Breast epithelium (tissue), 4 donors: ENCODE measurements at regions of chr6 and their contacts with region 1.

Region 1: GRCh38 chr6:159693128-159693893 is at the start of gene SOD2:
- DNase-seq: peak; percentile 69 to 74
- H3K4me3 ChIP-seq: peak within 1 kb of the TSS; percentile 94 to 95 (median 95)
- H3K27ac ChIP-seq: peak within 1 kb of the TSS; percentile 93 to 97
- H3K4me1 ChIP-seq: peaks cover 0 to 11% of the 10 kb centered on the region in 2 donors
- H3K27me3 ChIP-seq: no peaks in the 10 kb centered on the region
- CTCF ChIP-seq: no peak
- POLR2A ChIP-seq: peak; percentile 55
- total RNA-seq, gene SOD2: 999 to 1,273 (median 1,163) TPM

Region 2: GRCh38 chr6:158284007-158284875 is 1409.1 kb before region 1 on chr6:
- intact Hi-C with region 1: no loop called
- DNase-seq: peak in 1 of 2 donors; percentile 60
- H3K4me3 ChIP-seq: no peak overlapping the region
- H3K27ac ChIP-seq: peak overlapping the region; percentile 62 to 69
- H3K4me1 ChIP-seq: peaks cover 2 to 10% of the 10 kb centered on the region in 2 donors
- H3K27me3 ChIP-seq: no peaks in the 10 kb centered on the region
- CTCF ChIP-seq: no peak
- POLR2A ChIP-seq: no peak

Region 3: DNA sequence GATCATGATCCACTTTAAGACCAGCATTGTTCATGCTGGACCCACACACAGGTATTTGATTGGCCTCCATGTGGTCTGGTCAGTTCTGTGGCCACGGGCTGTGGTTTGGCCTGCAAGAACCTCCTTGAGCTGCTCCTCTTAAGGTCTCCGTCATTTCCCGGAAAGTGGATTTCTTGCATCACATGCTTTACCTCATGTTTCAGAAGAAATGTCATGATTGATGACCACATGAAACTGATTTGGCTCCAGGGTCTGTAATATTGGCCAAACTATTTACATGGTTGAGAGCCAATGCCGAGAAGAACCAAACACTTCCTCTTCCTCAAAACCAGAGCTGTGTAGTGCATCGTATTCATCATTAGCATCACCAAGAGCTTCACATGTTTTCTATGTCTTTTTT is 680.1 kb before region 1 on chr6:
- intact Hi-C with region 1: no loop called
- DNase-seq: no peak
- H3K4me3 ChIP-seq: no peak overlapping the region
- H3K27ac ChIP-seq: no peak overlapping the region
- H3K4me1 ChIP-seq: no peaks in the 10 kb centered on the region
- H3K27me3 ChIP-seq: no peaks in the 10 kb centered on the region
- CTCF ChIP-seq: no peak
- POLR2A ChIP-seq: no peak

Region 4: GRCh38 chr6:159726918-159727716 is 33.8 kb after region 1 on chr6 and contains the start of gene WTAP:
- intact Hi-C with region 1: loop called (anchors 2 kb)
- DNase-seq: peak; percentile 97
- H3K4me3 ChIP-seq: peak within 1 kb of the TSS; percentile 88 to 96 (median 93)
- H3K27ac ChIP-seq: peak within 1 kb of the TSS; percentile 100
- H3K4me1 ChIP-seq: peaks cover 0 to 4% of the 10 kb centered on the region in 2 donors
- H3K27me3 ChIP-seq: no peaks in the 10 kb centered on the region
- CTCF ChIP-seq: peak in 1 of 3 donors; percentile 13
- POLR2A ChIP-seq: peak; percentile 59
- total RNA-seq, gene WTAP: 115 to 153 (median 116) TPM

Region 5: DNA sequence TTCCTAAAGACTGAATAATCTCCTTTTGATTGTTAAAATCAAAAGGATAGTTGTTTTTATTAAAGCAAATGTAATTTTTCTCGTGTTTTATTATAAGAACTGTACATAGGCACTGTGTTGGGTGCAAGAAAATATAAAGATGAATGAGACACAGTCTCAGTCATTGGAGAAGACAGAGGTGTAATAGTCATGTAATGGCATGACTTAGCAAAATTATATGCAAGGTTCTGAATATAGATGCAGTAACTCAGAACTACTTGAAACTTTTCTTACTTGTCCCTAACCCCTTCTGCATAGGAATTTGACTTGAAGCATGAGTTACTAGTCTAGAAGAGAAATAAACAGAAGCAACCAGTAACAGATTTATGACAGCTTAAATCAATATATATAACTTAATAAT is 48.9 kb after region 1 on chr6:
- intact Hi-C with region 1: loop called (anchors 2 kb)
- DNase-seq: no peak
- H3K4me3 ChIP-seq: no peak overlapping the region
- H3K27ac ChIP-seq: no peak overlapping the region
- H3K4me1 ChIP-seq: no peaks in the 10 kb centered on the region
- H3K27me3 ChIP-seq: no peaks in the 10 kb centered on the region
- CTCF ChIP-seq: no peak
- POLR2A ChIP-seq: no peak

Region 6: GRCh38 chr6:159789377-159790148 is 96.3 kb after region 1 on chr6 and contains the start of gene TCP1:
- intact Hi-C with region 1: loop called (anchors 5 kb)
- DNase-seq: peak; percentile 99
- H3K4me3 ChIP-seq: peak within 1 kb of the TSS; percentile 86 to 99 (median 92)
- H3K27ac ChIP-seq: peak within 1 kb of the TSS; percentile 94 to 97
- H3K4me1 ChIP-seq: peaks cover 4 to 19% of the 10 kb centered on the region in 2 donors
- H3K27me3 ChIP-seq: no peaks in the 10 kb centered on the region
- CTCF ChIP-seq: no peak
- POLR2A ChIP-seq: peak; percentile 91
- total RNA-seq, gene TCP1: 119 to 151 (median 137) TPM